Dorsolateral prefrontal cortex (tissue), 120 donors: ENCODE measurements at regions of chr3 and their contacts with region 1.

Region 1: DNA sequence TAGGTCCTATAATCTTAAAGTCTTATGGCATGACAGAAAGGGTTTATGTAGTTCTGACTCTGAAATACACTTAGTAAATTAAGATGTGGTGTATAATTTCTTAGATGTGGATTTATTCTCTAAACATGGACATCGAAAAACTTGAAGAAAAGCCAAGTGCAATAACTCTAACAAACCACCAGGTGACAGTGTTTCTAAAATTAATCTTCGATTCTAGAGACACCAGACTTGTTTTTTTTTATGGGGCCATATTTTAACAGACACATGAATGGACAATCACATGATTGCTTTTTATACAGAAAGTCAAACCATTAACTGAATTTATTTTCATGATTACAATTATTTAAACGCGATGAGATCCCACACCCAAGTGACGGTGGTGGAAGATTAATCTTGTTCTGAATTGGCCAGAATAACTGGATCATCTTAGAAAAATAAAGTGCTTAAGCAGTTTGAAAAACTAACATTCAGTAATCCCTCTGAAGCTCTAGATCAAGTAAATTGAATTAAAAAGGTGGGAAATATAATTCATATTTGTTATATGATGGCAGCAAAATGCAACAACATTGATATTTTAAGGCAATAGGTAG is 305.1 kb downstream of the LSAMP start:
- DNase-seq: no peak
- H3K4me3 ChIP-seq: peak overlapping the region in 24 of 59 donors; percentile 1 to 45 (median 24)
- H3K27ac ChIP-seq: peak overlapping the region; percentile 35 to 94 (median 85)
- H3K27me3 ChIP-seq: no peaks in the 10 kb centered on the region
- CTCF ChIP-seq: peak; percentile 71 to 97 (median 89)

Region 2: DNA sequence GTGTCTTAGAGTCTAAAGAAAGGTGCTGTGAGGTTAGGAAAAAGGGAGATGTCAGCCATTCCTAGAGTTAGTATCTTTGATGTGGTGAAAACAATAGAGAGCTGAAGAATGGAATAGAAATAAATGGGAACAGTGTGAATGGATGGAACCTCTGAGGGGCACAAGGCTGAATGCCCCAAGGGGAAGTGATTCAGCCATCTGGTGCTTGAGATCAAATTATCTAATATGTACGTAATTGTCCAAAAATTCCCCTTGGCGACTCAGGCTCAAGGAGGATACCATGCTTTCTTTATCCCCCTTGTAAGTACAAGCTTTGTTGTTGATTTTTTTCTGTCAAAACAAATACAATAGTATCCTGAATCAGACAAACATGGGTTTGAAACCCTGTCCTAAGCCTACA is 56.5 kb before region 1 on chr3:
- intact Hi-C with region 1: no loop called
- DNase-seq: no peak
- H3K4me3 ChIP-seq: no peak overlapping the region
- H3K27ac ChIP-seq: no peak overlapping the region
- H3K27me3 ChIP-seq: no peaks in the 10 kb centered on the region
- CTCF ChIP-seq: no peak

Region 3: DNA sequence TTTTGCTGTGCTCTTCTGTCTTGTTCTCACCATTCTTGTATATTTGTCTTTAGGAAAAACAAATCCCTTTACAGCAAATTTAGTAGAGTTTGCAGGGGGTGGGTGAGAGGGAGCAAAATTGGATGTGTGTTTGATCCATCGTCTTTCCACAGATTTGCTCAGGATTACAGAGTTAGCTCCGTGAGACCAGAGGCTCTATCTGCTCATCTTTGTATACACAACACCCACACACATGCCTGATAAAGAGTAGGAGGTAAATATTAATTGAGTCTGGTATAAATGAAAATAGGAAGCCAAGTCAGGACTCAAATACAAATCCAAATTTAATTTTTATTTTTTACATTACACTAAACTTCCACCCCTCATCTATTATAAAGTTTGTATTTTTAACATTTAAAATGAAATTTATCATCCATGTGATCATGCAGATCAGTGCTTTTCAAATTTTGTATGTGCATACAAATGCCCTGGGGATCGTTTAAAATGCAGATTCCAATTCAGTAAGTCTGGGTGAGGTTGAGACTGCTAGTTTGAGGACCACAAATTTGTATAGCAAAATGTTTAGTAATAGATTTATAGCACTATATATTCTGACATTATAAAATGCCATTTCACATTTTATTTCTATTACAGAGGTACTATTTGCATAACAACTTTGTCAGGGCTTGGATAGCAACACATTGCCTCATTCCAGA is 21.6 kb before region 1 on chr3:
- intact Hi-C with region 1: loop called in 1 of 2 experiments (anchors 1 kb)
- DNase-seq: no peak
- H3K4me3 ChIP-seq: no peak overlapping the region
- H3K27ac ChIP-seq: peak overlapping the region in 1 of 59 donors; percentile 3
- H3K27me3 ChIP-seq: no peaks in the 10 kb centered on the region
- CTCF ChIP-seq: no peak

Region 4: DNA sequence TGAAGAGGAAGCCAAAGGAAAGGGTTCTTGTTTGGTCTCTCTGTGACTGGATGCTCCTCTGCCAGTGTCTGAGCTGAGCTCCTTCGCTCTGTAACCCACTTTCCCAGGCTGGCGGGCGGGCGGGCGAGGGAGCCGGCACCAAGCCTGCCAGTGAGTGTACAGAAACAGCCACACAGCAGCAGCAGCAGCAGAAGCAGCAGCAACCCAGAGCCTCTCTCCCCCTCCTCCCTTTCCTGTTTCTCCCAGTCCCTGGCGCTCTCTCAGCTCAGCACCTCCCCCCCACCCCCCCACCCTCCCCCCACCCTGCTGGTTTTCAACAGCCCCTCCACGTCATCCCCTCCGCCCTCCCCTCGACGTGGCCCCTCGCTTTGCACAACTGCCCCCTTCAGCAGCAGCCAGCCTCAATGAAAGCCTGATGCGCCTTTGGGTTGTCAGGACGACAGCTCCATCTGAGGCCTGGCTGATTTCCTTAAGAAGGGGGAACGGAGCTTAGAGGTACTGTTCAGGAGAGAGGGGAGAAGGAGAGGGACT is 305.2 kb after region 1 on chr3 and contains the start of gene LSAMP:
- intact Hi-C with region 1: loop called (anchors 5 to 10 kb)
- DNase-seq: peak; percentile 60 to 88 (median 77)
- H3K4me3 ChIP-seq: peak within 1 kb of the TSS; percentile 48 to 84 (median 71)
- H3K27ac ChIP-seq: peak within 1 kb of the TSS; percentile 80 to 97 (median 92)
- H3K27me3 ChIP-seq: no peaks in the 10 kb centered on the region
- CTCF ChIP-seq: peak in 2 of 56 donors; percentile 0 to 5
- total RNA-seq, gene LSAMP: 116 to 277 (median 204) TPM

Region 5: DNA sequence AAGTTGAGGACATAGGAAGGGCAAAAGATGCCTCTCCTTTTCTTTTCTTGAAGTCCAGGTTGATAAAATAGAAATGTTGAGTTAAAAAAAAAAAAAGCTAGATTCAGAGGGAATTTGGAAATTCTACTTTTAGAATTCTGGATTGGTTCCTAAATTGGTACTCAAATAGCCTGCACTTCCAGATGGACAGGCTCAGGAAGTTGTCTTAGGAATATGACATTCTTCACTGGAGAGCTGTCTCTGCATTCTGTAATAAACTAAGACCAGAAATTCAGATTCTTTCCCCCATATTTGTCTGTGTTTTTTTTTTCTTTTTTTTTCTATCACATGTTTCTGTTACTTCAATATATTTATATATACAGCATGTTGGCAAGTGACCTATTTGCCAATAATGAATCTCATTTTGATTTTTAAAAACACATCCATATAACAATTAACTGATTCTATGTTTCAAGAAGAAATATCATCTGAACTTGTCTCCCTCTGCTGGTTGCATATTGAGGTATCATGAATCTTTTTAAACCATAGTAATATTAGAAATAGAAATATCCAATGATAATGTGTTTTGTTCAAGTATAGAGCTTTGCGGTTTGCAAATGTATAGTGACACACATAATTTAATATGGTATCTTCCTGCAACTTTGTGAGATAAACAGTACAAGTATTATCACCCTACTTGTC is 313.6 kb after region 1 on chr3:
- intact Hi-C with region 1: loop called (anchors 5 to 10 kb)
- DNase-seq: no peak
- H3K4me3 ChIP-seq: no peak overlapping the region
- H3K27ac ChIP-seq: peak overlapping the region in 4 of 59 donors; percentile 19 to 54 (median 28)
- H3K27me3 ChIP-seq: no peaks in the 10 kb centered on the region
- CTCF ChIP-seq: peak; percentile 39 to 85 (median 65)